RWPE1 (cell line): ENCODE measurements at regions of chr7 and their contacts with region 1.

Region 1: GRCh38 chr7:43790006-43790405 is 31.5 kb downstream of the BLVRA start:
- DNase-seq: no peak
- H3K27ac ChIP-seq: no peak overlapping the region
- CTCF ChIP-seq: no peak

Region 2: DNA sequence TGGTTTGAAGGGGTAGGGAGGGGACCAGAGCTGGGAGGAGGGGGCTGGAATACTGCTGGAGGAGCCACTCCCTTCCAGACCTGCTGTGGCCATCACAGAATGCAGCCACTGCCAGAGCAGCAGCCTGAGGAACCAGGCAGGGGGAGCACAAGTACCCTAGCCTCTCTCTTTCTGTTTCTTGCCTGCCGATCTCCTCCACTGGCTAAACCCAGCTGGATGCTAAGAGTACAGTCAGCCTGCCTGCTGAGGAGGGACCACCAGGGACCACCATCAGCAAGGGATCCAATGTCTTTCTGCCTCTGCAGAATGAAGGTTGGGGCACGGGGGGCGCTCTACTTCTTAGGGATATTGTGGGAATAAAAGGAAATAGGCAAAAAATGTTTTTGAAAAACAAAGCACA is 26.8 kb before region 1 on chr7:
- CTCF ChIA-PET with region 1: interaction called, 10 read pairs
- POLR2A ChIA-PET with region 1: no interaction called
- DNase-seq: no peak
- H3K27ac ChIP-seq: peak overlapping the region; percentile 44
- CTCF ChIP-seq: no peak